Mammary epithelial cell (primary cell): ENCODE measurements at regions of chr1 and their contacts with region 1.

Region 1: DNA sequence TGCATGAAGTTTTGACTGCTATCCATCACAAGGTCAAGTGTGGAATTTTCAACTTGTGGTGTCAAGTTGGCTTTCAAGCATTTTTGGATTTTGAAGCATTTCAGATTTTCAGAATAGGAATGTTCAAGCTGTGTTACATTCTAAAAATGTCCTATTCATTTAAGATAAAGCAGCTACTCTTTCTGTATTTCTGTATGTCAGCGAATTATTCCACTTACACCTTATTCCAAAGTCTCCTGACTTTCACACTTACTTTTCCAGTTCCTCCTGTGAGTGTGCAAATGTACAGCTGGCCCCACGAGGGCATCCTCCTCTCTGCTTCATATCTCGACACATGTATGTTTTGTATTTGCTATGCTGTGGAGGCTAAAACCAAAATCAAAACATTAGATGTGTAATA is 51.9 kb downstream of the RC3H1 start:
- DNase-seq: no peak
- H3K4me3 ChIP-seq: no peak overlapping the region
- H3K27ac ChIP-seq: no peak overlapping the region
- H3K4me1 ChIP-seq: no peaks in the 10 kb centered on the region
- H3K27me3 ChIP-seq: no peaks in the 10 kb centered on the region
- CTCF ChIP-seq: no peak

Region 2: GRCh38 chr1:174040387-174040786 is 70.1 kb after region 1 on chr1:
- CTCF ChIA-PET with region 1: interaction called, 10 read pairs
- dilution Hi-C with region 1: no loop called
- in situ Hi-C with region 1: no loop called
- intact Hi-C with region 1: no loop called
- DNase-seq: peak; percentile 89
- H3K4me3 ChIP-seq: no peak overlapping the region
- H3K27ac ChIP-seq: no peak overlapping the region
- H3K4me1 ChIP-seq: peaks cover 5% of the 10 kb centered on the region
- H3K27me3 ChIP-seq: no peaks in the 10 kb centered on the region
- CTCF ChIP-seq: no peak

Region 3: GRCh38 chr1:174217787-174218574 is 247.7 kb after region 1 on chr1:
- CTCF ChIA-PET with region 1: no interaction called
- dilution Hi-C with region 1: no loop called
- in situ Hi-C with region 1: no loop called
- intact Hi-C with region 1: loop called (anchors 10 kb)
- DNase-seq: peak; percentile 27
- H3K4me3 ChIP-seq: no peak overlapping the region
- H3K27ac ChIP-seq: no peak overlapping the region
- H3K4me1 ChIP-seq: peaks cover 15% of the 10 kb centered on the region
- H3K27me3 ChIP-seq: no peaks in the 10 kb centered on the region
- CTCF ChIP-seq: peak; percentile 72 to 86